ENCODE measurements at regions of chr5 and their contacts with region 1.

Region 1: DNA sequence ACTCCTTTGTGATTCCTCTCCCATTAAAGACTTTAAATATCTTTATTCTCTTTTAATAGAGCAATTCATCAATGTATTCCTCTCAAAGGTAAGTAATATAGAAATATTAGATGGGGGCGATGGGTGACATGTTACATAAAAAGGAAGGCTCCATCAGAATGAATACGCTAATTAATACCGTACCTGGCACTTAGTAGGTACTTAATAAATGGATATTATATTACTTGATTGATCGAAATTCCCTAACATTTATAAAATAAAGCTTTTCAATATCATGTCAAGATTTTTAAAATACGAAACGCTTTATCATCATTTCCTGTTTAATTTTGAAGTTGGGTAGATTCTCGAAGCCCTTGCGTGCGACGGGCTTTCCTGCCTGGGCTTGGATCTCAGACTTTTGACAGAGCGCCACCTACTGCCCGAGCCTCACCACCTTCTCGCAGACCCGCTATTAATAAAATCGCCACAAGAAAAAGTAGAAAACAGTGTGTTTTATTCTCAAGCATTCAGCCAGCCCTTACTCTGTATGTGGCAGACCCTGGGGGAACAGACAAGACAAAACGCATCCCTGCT is 99.4 kb downstream of the C5orf15 start:
- DNase-seq: peak; percentile 53
- ATAC-seq: peak; percentile 90
- H3K4me3 ChIP-seq: no peak overlapping the region; a peak in 1 of 4 replicates
- H3K27ac ChIP-seq: no peak overlapping the region
- H3K4me1 ChIP-seq: peaks cover 0 to 5% of the 10 kb centered on the region in 2 experiments; a peak in 1 of 4 replicates
- H3K27me3 ChIP-seq: no peaks in the 10 kb centered on the region
- CTCF ChIP-seq: peak; percentile 66 to 90 (median 82)
- POLR2A ChIP-seq: no peak
- RAD21 ChIP-seq: peak; percentile 73

Region 2: GRCh38 chr5:133423618-133424282 is 445.3 kb before region 1 on chr5:
- CTCF ChIA-PET with region 1: interaction called, 3 read pairs
- POLR2A ChIA-PET with region 1: no interaction called
- RAD21 ChIA-PET with region 1: no interaction called
- intact Hi-C with region 1: loop called (anchors 1 kb)
- DNase-seq: peak; percentile 16
- ATAC-seq: peak; percentile 94
- H3K4me3 ChIP-seq: no peak overlapping the region
- H3K27ac ChIP-seq: no peak overlapping the region
- H3K4me1 ChIP-seq: peaks cover 0 to 9% of the 10 kb centered on the region in 2 experiments; a peak in 1 of 4 replicates
- H3K27me3 ChIP-seq: 0 out of 2 replicates have a peak, but pooled peaks cover 5% of the 10 kb centered on the region
- CTCF ChIP-seq: peak; percentile 62 to 92 (median 87)
- POLR2A ChIP-seq: no peak
- RAD21 ChIP-seq: peak; percentile 68

Region 3: DNA sequence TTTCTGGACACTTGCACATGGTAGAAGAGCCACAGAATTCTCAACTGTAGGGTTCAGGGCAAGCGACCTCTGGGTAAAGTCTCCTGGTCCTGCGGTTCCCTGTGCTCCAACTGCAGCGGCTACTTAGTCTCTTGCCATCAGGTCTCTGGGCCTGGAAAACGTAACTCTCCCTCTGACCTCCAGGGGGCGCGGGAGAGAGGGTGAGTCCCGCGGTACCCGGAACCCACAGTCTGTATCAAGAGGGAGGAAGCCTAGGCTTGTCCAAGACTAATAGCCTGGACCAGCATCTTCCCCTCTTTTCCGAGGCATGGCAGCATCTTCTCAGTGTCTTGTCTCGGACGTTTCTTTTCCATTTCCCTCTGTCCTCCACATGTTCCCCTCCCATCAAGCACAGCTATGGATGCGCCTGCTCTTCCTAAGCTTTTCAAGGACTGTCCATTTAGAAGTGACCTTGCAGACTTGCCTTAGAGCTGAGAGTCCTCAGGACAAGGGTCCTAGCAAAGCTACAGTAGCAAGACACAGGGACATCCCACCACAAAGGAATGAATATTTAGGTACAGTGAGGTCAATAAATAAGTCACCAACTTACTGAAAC is 316.0 kb before region 1 on chr5:
- CTCF ChIA-PET with region 1: no interaction called
- POLR2A ChIA-PET with region 1: no interaction called
- RAD21 ChIA-PET with region 1: no interaction called
- intact Hi-C with region 1: loop called (anchors 1 kb)
- DNase-seq: peak; percentile 41
- ATAC-seq: peak; percentile 100
- H3K4me3 ChIP-seq: no peak overlapping the region
- H3K27ac ChIP-seq: no peak overlapping the region
- H3K4me1 ChIP-seq: no peaks in the 10 kb centered on the region
- H3K27me3 ChIP-seq: peaks cover 32% of the 10 kb centered on the region
- CTCF ChIP-seq: peak; percentile 57 to 91 (median 80); a peak in 5 of 6 replicates
- POLR2A ChIP-seq: no peak
- RAD21 ChIP-seq: peak; percentile 56; the same call in 1 of the 2 replicates

Region 4: GRCh38 chr5:133635051-133635450 is 234.0 kb before region 1 on chr5:
- CTCF ChIA-PET with region 1: no interaction called
- POLR2A ChIA-PET with region 1: no interaction called
- RAD21 ChIA-PET with region 1: no interaction called
- intact Hi-C with region 1: no loop called
- DNase-seq: no peak
- ATAC-seq: no peak
- H3K4me3 ChIP-seq: no peak overlapping the region
- H3K27ac ChIP-seq: no peak overlapping the region
- H3K4me1 ChIP-seq: no peaks in the 10 kb centered on the region
- H3K27me3 ChIP-seq: peaks cover 19% of the 10 kb centered on the region; the same call in 1 of the 2 replicates
- CTCF ChIP-seq: no peak
- POLR2A ChIP-seq: no peak
- RAD21 ChIP-seq: no peak

Region 5: DNA sequence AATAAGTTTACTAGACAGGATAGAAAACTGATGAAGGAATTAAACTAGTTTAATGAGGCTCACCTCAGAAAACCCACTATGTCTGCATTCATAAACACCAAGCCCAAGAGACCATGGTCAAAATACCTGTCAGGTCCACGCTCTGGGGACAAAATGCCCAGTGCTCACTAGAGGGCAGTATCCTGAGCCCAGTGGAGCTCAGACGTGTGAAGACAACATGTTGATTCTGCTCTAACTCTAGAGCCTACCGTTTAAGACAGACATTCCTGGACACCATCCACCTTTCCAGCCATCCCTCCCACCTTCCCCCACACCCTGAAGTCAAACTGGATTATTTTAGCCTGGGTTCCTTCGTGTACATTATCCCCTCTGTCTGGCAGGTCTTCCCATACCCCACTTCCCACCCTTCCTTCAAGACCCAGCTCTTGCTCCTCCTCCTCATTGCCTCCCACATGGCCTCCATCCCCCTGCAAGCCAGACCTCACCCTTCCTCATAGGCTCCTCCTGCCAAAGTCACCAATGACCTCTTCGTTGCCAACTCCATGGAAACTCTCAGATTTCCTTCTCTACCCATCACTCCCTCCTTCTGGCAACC is 114.4 kb before region 1 on chr5:
- CTCF ChIA-PET with region 1: interaction called, 11 read pairs
- POLR2A ChIA-PET with region 1: no interaction called
- RAD21 ChIA-PET with region 1: no interaction called
- intact Hi-C with region 1: loop called (anchors 1 kb)
- DNase-seq: peak; percentile 26
- ATAC-seq: peak; percentile 95
- H3K4me3 ChIP-seq: no peak overlapping the region
- H3K27ac ChIP-seq: no peak overlapping the region
- H3K4me1 ChIP-seq: no peaks in the 10 kb centered on the region
- H3K27me3 ChIP-seq: peaks cover 30% of the 10 kb centered on the region
- CTCF ChIP-seq: peak; percentile 21 to 79 (median 77); a peak in 5 of 6 replicates
- POLR2A ChIP-seq: no peak
- RAD21 ChIP-seq: peak; percentile 49